Thyroid gland (tissue), 4 donors: ENCODE measurements at regions of chr2 and their contacts with region 1.

Region 1: GRCh38 chr2:205680067-205680466 is 2.2 kb upstream of the NRP2 start:
- DNase-seq: peak; percentile 50 to 55
- H3K4me3 ChIP-seq: no peak overlapping the region
- H3K27ac ChIP-seq: no peak overlapping the region
- H3K4me1 ChIP-seq: peaks cover 25 to 28% of the 10 kb centered on the region in 2 donors
- H3K27me3 ChIP-seq: no peaks in the 10 kb centered on the region
- CTCF ChIP-seq: peak; percentile 41 to 71 (median 54)
- POLR2A ChIP-seq: no peak

Region 2: DNA sequence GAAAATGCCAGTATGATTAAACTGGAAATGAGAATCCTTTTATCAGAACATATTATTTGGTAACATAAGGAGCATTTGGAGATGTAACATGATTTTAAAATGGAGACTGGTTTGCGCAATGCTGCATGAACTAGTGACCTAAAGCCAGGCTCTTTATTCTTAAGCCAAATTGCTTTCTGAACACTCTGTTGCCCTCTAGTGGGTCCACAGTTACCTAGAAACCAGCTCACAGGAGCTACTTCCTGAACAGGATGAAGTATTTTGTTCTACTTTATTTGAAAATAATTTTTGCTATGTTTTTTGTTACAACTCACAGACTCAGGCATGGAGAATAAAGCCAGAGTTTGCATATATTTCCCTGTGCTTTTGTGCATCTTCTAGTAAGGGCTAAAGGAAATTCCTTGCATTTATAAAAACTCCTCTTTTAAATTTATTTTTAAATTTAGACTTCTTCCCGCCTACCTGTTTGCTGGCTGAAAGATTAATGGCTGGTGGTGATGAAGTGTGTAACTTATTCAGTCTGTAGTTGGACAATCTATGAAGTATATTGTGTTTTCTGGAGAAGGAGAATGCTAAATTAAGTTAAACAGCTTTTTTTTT is 988.1 kb before region 1 on chr2:
- intact Hi-C with region 1: loop called (anchors 5 kb)
- DNase-seq: peak; percentile 48 to 58
- H3K4me3 ChIP-seq: no peak overlapping the region
- H3K27ac ChIP-seq: no peak overlapping the region
- H3K4me1 ChIP-seq: no peaks in the 10 kb centered on the region
- H3K27me3 ChIP-seq: no peaks in the 10 kb centered on the region
- CTCF ChIP-seq: peak in 5 of 6 experiments; percentile 60 to 79 (median 75)
- POLR2A ChIP-seq: no peak

Region 3: DNA sequence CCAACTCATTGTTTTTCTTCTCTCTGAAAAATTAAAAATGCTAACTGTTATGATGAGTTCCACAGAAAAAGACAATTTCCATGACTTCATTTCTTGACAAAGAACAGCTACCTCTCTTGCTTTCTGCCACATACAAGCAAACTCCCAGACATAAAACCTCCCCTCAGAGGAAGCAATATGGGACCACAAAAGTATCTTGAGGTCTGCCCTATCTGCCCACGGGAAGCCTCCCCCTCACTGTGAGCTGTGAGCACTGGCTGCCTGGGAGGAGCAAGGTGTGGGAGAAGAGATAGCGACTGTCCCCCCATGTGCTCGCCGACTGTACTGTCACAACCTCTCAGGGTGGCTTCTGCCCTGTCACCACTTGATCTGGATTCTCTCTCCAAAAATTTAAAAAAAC is 67.4 kb before region 1 on chr2:
- intact Hi-C with region 1: no loop called
- DNase-seq: no peak
- H3K4me3 ChIP-seq: no peak overlapping the region
- H3K27ac ChIP-seq: no peak overlapping the region
- H3K4me1 ChIP-seq: no peaks in the 10 kb centered on the region
- H3K27me3 ChIP-seq: no peaks in the 10 kb centered on the region
- CTCF ChIP-seq: no peak
- POLR2A ChIP-seq: no peak